ENCODE measurements at regions of chr1 and their contacts with region 1.

Region 1: DNA sequence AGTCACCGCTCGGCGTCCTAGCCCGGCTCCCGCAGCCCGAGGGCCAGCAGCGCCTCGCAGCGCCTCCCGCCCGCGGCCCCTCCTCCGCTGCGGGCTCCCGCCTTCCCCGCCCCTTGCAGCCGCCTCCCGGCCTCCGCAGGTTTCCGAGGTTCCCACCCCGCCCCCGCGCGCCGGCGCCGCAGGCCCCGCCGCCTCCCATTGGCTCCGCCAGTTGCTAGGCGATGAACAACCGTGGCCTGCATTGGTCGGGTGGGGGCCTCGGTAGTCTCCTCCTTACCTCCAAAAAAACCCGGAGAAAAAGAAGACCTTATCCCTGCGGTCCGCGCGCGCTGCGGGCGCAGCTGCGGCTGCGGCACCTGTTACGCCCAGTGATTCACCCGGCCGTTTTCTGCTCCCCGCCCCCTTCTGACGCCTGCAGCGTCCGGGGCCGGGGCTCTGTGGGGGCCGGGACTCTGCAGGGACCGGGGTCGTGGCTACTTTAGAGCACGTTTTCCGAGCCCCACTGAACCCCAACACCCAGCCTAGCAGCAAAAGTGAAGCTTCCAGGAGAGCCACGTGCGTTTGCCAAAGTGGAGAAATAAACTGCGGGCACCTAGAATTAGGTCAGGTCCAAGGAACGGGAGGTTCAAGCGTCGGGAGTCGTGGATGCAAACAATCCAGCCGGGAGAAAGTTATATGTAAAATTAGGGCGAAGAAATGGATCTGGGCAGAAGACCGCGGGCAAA is at the start of gene SSX2IP:
- DNase-seq: peak; percentile 100
- H3K4me3 Mint-ChIP-seq: peak within 1 kb of the TSS; percentile 92
- H3K27ac Mint-ChIP-seq: peak within 1 kb of the TSS; percentile 91
- H3K4me1 Mint-ChIP-seq: peaks cover 59% of the 10 kb centered on the region
- H3K27me3 Mint-ChIP-seq: peaks cover 3% of the 10 kb centered on the region
- total RNA-seq, gene SSX2IP: 11.9 to 12.6 TPM

Region 2: DNA sequence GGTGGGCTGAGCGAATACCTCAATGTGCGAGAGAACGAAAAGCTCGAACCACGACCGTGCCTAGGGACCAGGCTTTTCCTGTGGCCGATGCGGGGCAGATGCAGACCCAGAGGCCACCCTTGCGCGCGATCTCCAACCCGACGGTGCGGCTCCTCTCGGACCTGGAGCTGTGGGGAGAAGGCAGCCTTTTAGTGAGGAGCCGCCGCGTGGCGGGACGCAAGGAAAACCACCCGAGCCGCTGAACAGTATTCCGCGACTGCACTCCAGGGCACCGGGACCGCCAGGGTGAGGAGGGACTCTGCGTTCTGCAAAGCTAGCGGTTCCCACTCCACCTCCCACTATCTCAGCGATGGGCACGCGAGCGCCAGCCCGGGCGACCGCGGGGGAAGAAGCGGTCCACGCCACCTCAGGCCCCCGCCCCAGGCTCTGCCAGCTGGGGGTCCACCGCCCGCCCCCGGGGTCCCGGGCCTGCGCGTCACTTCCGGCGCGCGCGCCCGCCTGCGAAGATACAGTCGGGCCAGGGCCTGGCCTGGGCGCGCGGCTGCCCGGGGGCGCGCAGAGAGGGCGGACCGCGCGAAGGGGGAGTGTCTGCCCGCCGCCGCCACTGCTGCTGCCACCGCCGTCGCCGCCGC is 613.0 kb before region 1 on chr1:
- CTCF ChIA-PET with region 1: no interaction called
- intact Hi-C with region 1: loop called (anchors 1 kb)
- DNase-seq: peak; percentile 69
- H3K4me3 Mint-ChIP-seq: peak overlapping the region; percentile 83
- H3K27ac Mint-ChIP-seq: peak overlapping the region; percentile 31
- H3K4me1 Mint-ChIP-seq: peaks cover 10% of the 10 kb centered on the region
- H3K27me3 Mint-ChIP-seq: no peaks in the 10 kb centered on the region

Region 3: DNA sequence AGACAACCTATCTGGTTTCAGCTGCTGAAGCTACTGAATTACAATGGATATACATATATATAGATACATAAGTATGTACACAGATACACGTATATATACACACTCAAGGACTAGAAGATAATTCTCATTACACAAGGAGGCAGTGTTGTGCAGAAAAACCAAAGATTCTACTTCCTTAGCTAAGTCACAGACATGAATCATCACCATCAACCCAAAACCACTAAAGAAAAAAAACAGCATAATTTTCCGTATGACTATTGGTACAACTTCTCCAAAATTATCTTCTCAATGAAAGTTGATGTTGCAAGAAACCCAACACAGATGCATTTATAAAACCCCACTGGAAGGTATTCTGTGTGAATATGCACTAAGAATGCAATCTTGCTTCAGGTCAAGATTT is 248.3 kb before region 1 on chr1:
- CTCF ChIA-PET with region 1: no interaction called
- intact Hi-C with region 1: loop called (anchors 1 kb)
- DNase-seq: no peak
- H3K4me3 Mint-ChIP-seq: no peak overlapping the region
- H3K27ac Mint-ChIP-seq: no peak overlapping the region
- H3K4me1 Mint-ChIP-seq: peaks cover 25% of the 10 kb centered on the region
- H3K27me3 Mint-ChIP-seq: no peaks in the 10 kb centered on the region

Region 4: DNA sequence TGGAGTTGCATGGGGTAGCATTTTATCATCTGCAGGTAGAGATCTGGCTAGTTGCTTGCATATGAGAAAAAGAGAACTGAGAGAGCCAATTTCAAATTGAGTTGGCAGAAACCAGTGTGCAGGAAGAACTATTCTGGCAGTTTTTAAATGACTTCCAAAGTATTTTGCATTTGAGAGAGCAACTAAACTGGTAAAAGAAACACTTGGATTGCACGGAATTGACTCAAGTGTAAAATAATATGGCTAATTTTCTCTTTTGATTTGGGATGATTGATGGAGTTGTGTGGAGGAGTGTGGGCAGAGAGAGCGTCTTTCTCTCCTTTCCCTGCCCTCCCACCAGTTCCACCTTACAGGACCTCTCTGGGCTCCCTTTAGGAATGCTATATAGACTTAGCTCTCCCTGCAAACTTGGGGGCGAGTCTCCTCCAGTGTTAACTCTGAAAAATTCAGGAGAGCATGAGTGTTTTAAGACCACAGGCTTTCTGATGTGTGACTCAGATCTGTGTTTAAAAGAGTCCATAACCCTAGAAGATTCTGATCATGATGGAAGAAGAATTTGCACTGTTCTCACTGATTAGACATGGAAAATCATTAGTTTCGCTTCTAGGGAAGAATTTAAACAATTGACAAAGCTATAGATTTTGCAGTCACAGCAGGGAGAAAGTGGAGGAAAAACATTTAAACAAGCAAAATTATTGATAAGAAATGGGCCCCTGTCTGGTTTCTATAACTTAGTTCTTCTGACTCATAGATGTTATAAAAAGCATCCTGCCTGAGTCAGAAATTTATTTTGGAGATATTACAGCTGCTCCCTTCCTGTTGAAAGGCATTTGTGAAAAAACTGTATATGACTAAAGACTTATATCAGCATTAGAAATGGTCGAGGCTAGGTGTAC is 91.5 kb before region 1 on chr1:
- CTCF ChIA-PET with region 1: no interaction called
- intact Hi-C with region 1: loop called (anchors 1 kb)
- DNase-seq: no peak
- H3K4me3 Mint-ChIP-seq: no peak overlapping the region
- H3K27ac Mint-ChIP-seq: peak overlapping the region; percentile 70
- H3K4me1 Mint-ChIP-seq: peaks cover 31% of the 10 kb centered on the region
- H3K27me3 Mint-ChIP-seq: no peaks in the 10 kb centered on the region

Region 5: GRCh38 chr1:84853741-84854721 is 163.5 kb after region 1 on chr1:
- CTCF ChIA-PET with region 1: no interaction called
- intact Hi-C with region 1: loop called (anchors 1 kb)
- DNase-seq: peak; percentile 64
- H3K4me3 Mint-ChIP-seq: no peak overlapping the region
- H3K27ac Mint-ChIP-seq: peak overlapping the region; percentile 80
- H3K4me1 Mint-ChIP-seq: peaks cover 35% of the 10 kb centered on the region
- H3K27me3 Mint-ChIP-seq: no peaks in the 10 kb centered on the region

Region 6: DNA sequence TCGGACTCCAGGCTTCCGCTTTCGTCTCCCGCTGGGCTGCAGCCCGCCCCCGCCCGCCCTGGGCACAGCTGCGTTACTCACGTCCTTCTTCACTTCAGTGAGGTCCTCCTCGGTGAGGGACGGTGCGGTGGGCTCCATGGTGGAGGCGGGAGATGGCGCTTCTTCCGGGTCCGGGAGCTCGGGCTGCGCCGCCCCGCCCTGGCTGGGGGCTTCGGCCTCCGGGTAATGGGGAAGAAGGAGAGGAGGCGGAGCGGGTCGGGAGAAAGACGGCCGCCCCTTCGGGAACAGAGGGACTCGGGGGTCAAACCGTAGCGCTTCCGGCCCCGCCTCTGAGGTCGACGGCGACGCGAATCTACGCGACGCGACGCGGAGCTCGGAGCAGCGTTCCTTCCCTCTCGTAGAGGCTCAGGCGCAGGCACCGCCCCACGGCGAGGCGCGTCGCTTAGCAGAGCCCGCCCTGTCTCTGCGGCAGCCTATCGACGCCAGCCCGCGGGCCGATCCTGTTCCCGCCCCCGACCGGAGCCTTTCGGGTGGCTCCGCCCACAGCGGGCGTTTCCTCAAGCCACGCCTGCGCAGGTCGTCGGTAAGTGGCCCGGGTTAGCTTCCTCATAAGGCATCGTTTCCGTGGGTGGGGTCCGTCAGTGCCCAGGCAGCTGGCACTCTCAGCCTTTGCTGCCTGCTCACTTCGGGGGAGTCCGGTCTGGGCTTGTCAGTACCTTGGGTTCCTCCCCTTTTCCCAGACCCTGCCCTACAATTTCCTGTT is 585.8 kb after region 1 on chr1 and contains the start of gene BCL10:
- CTCF ChIA-PET with region 1: no interaction called
- intact Hi-C with region 1: loop called (anchors 5 kb)
- DNase-seq: peak; percentile 97
- H3K4me3 Mint-ChIP-seq: peak within 1 kb of the TSS; percentile 80
- H3K27ac Mint-ChIP-seq: peak within 1 kb of the TSS; percentile 87
- H3K4me1 Mint-ChIP-seq: peaks cover 46% of the 10 kb centered on the region
- H3K27me3 Mint-ChIP-seq: no peaks in the 10 kb centered on the region
- total RNA-seq, gene BCL10: 13.8 to 17.7 TPM

Measured in activated naive CD4-positive, alpha-beta T cell treated with anti-CD3 and anti-CD28 coated beads for 36 hours (primary cell).